ENCODE measurements at regions of chr3 and their contacts with region 1.

Region 1: GRCh38 chr3:131381444-131382291 is at the start of gene NUDT16:
- DNase-seq: peak; percentile 100
- ATAC-seq: peak; percentile 98 to 99
- total RNA-seq, gene NUDT16: 19.8 to 25.4 TPM

Region 2: GRCh38 chr3:131432441-131432840 is 50.8 kb after region 1 on chr3:
- intact Hi-C with region 1: no loop called
- DNase-seq: no peak
- ATAC-seq: no peak

Region 3: DNA sequence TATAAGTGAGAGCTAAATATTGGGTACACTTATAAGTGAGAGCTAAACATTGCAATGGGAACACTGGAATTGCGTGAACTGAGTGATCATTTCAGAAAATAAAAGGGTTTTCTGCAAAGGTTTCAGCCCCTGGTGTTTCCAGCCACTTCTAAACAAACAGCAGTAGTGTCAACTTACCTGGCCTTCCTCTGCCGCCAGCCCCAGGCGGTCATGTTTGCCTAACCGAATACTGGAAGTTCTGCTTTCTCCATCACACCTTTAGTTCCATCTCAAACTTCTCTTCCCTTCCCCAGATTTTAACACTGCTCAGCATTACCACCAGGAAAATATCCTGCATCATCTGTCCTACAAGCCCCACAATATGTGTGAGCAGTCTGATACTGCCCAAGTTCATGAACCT is 62.5 kb after region 1 on chr3:
- intact Hi-C with region 1: no loop called
- DNase-seq: no peak
- ATAC-seq: no peak

Region 4: DNA sequence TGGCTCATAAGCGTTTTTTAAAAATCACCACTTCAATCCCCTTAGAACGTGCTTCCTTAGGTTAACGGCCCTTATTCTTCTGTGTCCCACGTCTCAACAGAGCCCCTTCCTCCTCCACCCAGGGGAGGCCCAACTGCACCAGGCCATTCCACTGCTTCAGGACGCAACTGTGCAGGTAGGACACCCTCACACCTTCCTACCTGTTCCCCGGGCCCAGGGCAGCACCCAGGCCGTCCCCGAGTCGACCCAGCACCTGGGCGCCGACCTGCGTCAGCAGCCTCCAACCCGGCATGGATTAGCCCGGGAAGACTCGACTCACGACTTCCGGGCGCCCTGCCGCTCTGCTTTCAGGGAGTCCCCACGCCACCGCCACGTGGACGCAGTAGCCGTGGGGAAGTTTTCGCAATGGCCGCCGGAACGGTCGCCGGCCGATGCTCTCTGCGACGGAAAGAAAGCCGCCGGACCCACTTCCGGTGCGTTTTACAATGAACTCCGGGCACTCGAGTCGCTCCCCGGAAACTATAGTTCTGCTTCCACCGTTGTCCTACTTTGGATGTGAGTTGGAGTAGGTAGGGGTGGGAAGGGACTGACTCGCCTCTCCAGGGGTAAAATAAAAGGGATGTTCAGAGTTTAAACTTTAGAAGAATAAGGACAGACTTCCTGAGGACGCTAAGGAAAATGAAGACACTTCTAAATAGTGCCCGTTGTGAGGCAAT is 121.0 kb after region 1 on chr3 and contains the start of gene MRPL3:
- intact Hi-C with region 1: loop called in 1 of 2 experiments (anchors 10 kb)
- DNase-seq: peak; percentile 91
- ATAC-seq: peak; percentile 96 to 98
- total RNA-seq, gene MRPL3: 47.0 to 62.0 TPM

Measured in left cardiac atrium (tissue), 4 donors.